Motor neuron (in vitro differentiated cells): ENCODE measurements at regions of chr1 and their contacts with region 1.

Region 1: DNA sequence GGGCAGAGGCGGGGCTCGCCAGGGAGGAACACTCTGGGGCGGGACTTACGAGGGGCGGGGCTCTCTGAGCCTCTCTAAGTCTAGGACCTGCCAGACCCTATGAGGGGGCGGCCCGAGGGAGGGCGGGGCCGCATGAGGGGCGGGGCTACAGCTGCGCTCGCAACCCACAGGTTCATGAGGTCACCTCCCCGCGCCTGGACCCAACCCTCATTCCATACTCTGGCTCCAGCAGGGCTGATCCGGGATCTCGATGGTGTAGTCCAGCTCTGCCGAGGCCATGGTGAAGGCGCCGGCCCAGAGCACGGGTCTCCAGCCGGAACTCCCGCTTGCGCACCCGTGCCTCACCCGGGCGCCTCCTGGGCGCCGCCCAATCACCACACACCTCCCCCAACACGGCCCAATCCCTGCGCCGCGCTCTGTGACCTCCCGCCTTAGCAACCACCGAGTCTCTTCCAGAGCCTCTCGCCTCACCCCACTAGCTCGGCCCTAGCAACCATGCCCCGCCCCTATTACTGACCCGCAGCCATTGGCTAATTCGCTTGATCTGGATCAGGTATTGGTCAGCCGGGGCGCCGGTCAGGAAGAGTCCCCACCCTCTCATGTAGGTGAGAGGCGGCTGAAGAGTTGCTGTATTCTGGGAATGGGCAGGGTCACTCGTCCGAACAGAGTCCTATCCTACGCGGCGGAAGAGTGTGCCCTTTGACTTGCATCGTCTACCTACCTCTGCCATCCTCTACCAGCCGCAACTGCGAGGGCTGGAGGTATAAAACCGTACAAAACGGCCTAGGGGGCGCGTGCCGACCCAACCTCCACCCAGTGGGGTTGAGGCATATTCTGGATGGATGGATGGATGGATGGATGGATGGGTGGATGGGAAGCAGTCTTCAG is at the starts of genes ARMH1 and TMEM53:
- ATAC-seq: peak; percentile 87 to 94 (median 93)
- H3K4me3 ChIP-seq: peak within 1 kb of the TSS; percentile 61 to 92 (median 67)
- H3K27ac ChIP-seq: peak within 1 kb of the TSS; percentile 83
- H3K4me1 ChIP-seq: peaks cover 26 to 29% of the 10 kb centered on the region in 2 donors
- total RNA-seq, gene ARMH1: 3.4 to 20.8 (median 6.0) TPM
- total RNA-seq, gene TMEM53: 6.8 to 11.4 (median 10.6) TPM

Region 2: DNA sequence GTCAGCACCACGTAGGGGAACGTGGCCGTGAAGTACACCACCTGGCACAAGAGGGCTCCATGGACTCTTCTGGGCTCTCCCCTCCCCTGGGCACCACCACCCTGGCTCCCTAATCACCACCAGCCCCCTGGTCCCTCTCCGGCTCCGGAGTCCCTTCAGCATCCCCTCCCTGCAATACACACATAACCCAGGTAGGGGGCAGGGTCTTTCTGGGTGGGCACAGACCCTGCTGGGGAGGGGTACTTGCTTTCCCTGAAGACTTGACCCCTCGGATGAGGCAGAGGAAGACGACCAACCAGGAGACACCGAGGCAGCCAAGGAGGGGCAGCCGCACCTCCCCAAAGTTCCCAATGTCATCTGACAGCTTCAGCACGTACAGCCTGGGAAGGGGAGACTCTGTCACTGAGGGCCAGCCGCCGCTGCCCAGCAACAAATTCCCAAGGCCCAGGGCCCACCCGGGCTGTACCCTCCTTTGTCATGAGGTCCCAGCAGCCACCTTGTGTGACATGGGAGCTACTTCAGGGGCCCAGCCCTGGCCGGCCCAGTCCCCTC is 671.7 kb before region 1 on chr1:
- in situ Hi-C with region 1: loop called in 3 of 9 experiments (anchors 25 kb)
- ATAC-seq: no peak
- H3K4me3 ChIP-seq: no peak overlapping the region
- H3K27ac ChIP-seq: no peak overlapping the region
- H3K4me1 ChIP-seq: peaks cover 0 to 4% of the 10 kb centered on the region in 2 donors

Region 3: GRCh38 chr1:44500181-44501046 is 173.9 kb before region 1 on chr1:
- in situ Hi-C with region 1: no loop called
- ATAC-seq: peak; percentile 23 to 93 (median 81)
- H3K4me3 ChIP-seq: peak overlapping the region in 3 of 5 donors; percentile 2 to 17 (median 10)
- H3K27ac ChIP-seq: peak overlapping the region; percentile 80 to 86
- H3K4me1 ChIP-seq: peaks cover 49 to 52% of the 10 kb centered on the region in 2 donors